CD8-positive, alpha-beta T cell (primary cell): ENCODE measurements at regions of chr13 and their contacts with region 1.

Region 1: DNA sequence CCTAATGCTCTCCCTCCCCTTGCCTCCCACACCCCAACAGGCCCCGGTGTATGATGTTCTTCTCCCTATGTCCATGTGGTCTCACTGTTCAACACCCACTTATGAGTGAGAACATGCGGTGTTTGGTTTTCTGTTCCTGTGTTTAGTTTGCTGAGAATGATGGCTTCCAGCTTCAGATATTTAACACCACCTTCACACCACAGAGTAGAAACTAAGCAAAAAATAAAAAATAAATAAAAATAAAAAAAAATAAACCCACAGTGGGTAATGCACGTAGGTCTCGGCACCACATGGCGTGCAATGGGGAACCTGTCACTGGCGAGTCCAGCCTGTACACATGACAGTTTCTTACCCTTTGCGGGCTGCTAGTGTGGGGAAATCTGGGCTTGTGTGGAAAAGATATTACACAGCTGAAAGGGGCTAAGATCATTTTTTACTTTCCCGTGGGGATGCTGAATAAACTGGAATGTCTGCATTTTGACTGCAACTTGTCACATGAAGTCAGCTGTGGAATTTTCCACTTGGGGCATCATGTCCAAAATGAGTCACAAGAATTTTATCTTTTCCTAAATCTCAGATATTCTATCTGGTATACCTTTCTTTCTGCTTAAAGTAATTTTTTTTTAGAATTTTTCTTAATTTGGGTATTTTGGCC is 170.5 kb downstream of the IRS2 start:
- DNase-seq: no peak
- ATAC-seq: no peak
- H3K4me3 ChIP-seq: no peak overlapping the region
- H3K4me3 Mint-ChIP-seq: no peak overlapping the region
- H3K27ac ChIP-seq: no peak overlapping the region
- H3K27ac Mint-ChIP-seq: no peak overlapping the region
- H3K4me1 ChIP-seq: no peaks in the 10 kb centered on the region
- H3K4me1 Mint-ChIP-seq: no peaks in the 10 kb centered on the region
- H3K27me3 ChIP-seq: no peaks in the 10 kb centered on the region
- H3K27me3 Mint-ChIP-seq: no peaks in the 10 kb centered on the region
- CTCF ChIP-seq: no peak

Region 2: DNA sequence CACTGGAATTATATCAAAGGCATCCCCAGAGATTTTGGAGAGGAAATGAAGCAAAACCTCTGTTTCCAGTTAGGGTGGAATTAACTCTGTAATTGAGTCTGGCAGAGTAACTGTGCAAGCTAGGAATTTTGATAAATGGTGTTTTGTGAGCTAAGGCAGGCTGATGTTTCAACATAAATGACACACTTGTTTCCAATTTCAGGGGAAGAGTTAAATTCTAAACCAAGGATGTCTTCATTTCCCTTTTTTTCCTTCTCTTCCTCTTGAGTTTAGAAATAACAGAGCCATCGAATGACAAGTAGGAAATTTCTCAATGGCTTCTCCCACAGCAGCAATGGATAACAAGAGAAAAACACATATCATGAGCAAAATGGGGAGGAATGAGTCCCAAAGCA is 39.4 kb after region 1 on chr13:
- CTCF ChIA-PET with region 1: no interaction called
- POLR2A ChIA-PET with region 1: no interaction called
- intact Hi-C with region 1: loop called in 1 of 2 experiments (anchors 1 kb)
- DNase-seq: no peak
- ATAC-seq: no peak
- H3K4me3 ChIP-seq: no peak overlapping the region
- H3K4me3 Mint-ChIP-seq: no peak overlapping the region
- H3K27ac ChIP-seq: no peak overlapping the region
- H3K27ac Mint-ChIP-seq: no peak overlapping the region
- H3K4me1 ChIP-seq: no peaks in the 10 kb centered on the region
- H3K4me1 Mint-ChIP-seq: no peaks in the 10 kb centered on the region
- H3K27me3 ChIP-seq: no peaks in the 10 kb centered on the region
- H3K27me3 Mint-ChIP-seq: peaks cover 7% of the 10 kb centered on the region
- CTCF ChIP-seq: no peak